CD8-positive, alpha-beta T cell (primary cell): ENCODE measurements at regions of chr6 and their contacts with region 1.

Region 1: GRCh38 chr6:20350215-20350614 is 51.5 kb upstream of the E2F3 start:
- DNase-seq: no peak
- ATAC-seq: no peak
- H3K4me3 ChIP-seq: no peak overlapping the region
- H3K4me3 Mint-ChIP-seq: no peak overlapping the region
- H3K27ac ChIP-seq: no peak overlapping the region
- H3K27ac Mint-ChIP-seq: no peak overlapping the region
- H3K4me1 ChIP-seq: no peaks in the 10 kb centered on the region
- H3K4me1 Mint-ChIP-seq: peaks cover 3% of the 10 kb centered on the region
- H3K27me3 ChIP-seq: no peaks in the 10 kb centered on the region
- H3K27me3 Mint-ChIP-seq: no peaks in the 10 kb centered on the region
- CTCF ChIP-seq: no peak

Region 2: GRCh38 chr6:20236909-20237600 is 113.2 kb before region 1 on chr6:
- CTCF ChIA-PET with region 1: no interaction called
- POLR2A ChIA-PET with region 1: no interaction called
- intact Hi-C with region 1: no loop called
- DNase-seq: no peak
- ATAC-seq: no peak
- H3K4me3 ChIP-seq: no peak overlapping the region
- H3K4me3 Mint-ChIP-seq: no peak overlapping the region
- H3K27ac ChIP-seq: no peak overlapping the region
- H3K27ac Mint-ChIP-seq: no peak overlapping the region
- H3K4me1 ChIP-seq: no peaks in the 10 kb centered on the region
- H3K4me1 Mint-ChIP-seq: peaks cover 13% of the 10 kb centered on the region
- H3K27me3 ChIP-seq: no peaks in the 10 kb centered on the region
- H3K27me3 Mint-ChIP-seq: no peaks in the 10 kb centered on the region
- CTCF ChIP-seq: no peak

Region 3: DNA sequence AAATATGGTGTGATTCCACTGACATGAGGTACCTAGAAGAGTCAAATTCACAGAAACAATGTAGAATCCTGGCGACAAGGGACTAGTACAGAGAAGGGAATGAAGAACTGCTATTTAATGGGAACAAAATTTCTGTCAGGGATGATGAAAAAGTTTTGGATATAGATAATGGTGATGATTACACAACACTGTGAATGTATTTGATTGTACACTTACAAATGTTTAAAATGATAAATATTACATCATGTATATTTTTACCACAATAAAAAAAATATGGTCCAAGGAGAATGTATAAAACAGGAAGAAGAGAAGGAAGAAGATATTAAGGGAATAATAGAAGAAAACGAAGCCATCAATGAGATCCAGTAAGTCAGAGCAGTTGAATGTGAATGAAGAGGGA is 43.1 kb after region 1 on chr6:
- CTCF ChIA-PET with region 1: no interaction called
- POLR2A ChIA-PET with region 1: no interaction called
- intact Hi-C with region 1: loop called in 1 of 2 experiments (anchors 5 kb)
- DNase-seq: no peak
- ATAC-seq: no peak
- H3K4me3 ChIP-seq: no peak overlapping the region
- H3K4me3 Mint-ChIP-seq: no peak overlapping the region
- H3K27ac ChIP-seq: no peak overlapping the region
- H3K27ac Mint-ChIP-seq: no peak overlapping the region
- H3K4me1 ChIP-seq: no peaks in the 10 kb centered on the region
- H3K4me1 Mint-ChIP-seq: peaks cover 10% of the 10 kb centered on the region
- H3K27me3 ChIP-seq: no peaks in the 10 kb centered on the region
- H3K27me3 Mint-ChIP-seq: no peaks in the 10 kb centered on the region
- CTCF ChIP-seq: no peak